Activated T-helper 2 cell treated with anti-CD3 and anti-CD28 coated beads, Interferon-gamma antibody, Interleukin-2, Interleukin-4, amounts not matched to agents 10 μg/mL and 5 μg/mL and 100 μg/mL, durations not matched to agents 14 hours and 24 hours and 36 hours (primary cell): ENCODE measurements at regions of chr6 and their contacts with region 1.

Region 1: GRCh38 chr6:95431637-95432228 is 145.6 kb upstream of the MANEA start:
- DNase-seq: no peak
- H3K4me3 Mint-ChIP-seq: no peak overlapping the region
- H3K27ac Mint-ChIP-seq: no peak overlapping the region
- H3K4me1 Mint-ChIP-seq: no peaks in the 10 kb centered on the region
- H3K27me3 Mint-ChIP-seq: no peaks in the 10 kb centered on the region

Region 2: GRCh38 chr6:95469511-95469910 is 37.8 kb after region 1 on chr6:
- intact Hi-C with region 1: no loop called
- DNase-seq: no peak
- H3K4me3 Mint-ChIP-seq: no peak overlapping the region
- H3K27ac Mint-ChIP-seq: no peak overlapping the region
- H3K4me1 Mint-ChIP-seq: no peaks in the 10 kb centered on the region
- H3K27me3 Mint-ChIP-seq: no peaks in the 10 kb centered on the region

Region 3: GRCh38 chr6:95648638-95649037 is 216.9 kb after region 1 on chr6:
- intact Hi-C with region 1: no loop called
- DNase-seq: no peak
- H3K4me3 Mint-ChIP-seq: no peak overlapping the region
- H3K27ac Mint-ChIP-seq: no peak overlapping the region
- H3K4me1 Mint-ChIP-seq: no peaks in the 10 kb centered on the region
- H3K27me3 Mint-ChIP-seq: no peaks in the 10 kb centered on the region

Region 4: DNA sequence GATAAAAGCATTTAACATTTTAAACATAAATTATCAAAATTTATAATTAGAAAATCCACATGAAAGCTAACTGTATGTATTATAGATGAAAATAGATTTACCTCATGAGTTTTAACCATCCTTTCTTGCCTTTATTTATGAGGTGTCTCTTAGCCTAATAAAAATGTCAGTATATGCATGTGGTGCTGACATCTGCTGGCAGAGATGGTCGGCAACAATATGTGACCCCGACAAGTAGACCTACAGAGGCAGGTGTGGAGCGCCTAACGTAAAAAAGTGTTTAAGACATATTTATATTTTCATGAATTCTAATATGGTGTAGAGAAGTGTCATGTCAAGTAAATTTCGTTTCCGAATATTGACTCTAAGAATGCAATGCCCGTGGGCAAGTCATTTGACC is 435.0 kb after region 1 on chr6:
- intact Hi-C with region 1: loop called (anchors 5 kb)
- DNase-seq: no peak
- H3K4me3 Mint-ChIP-seq: no peak overlapping the region
- H3K27ac Mint-ChIP-seq: no peak overlapping the region
- H3K4me1 Mint-ChIP-seq: no peaks in the 10 kb centered on the region
- H3K27me3 Mint-ChIP-seq: no peaks in the 10 kb centered on the region

Region 5: DNA sequence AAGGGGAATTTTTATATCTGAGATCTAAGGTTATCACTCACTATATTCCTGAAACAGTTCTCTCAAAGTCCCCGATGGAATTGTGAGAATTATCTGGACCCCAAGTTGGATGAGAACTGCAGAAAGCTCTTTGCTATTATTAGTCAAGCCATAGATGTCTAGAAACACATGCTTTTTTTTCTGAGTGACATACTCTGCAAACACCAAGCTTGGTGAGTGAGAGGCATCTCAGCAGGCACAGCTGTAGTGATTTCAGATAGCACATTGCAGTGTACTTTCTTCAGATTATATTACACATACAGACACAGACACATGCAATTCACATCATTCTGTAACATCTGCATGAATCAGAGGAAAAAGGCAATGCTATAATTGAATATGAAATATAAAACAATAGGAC is 978.7 kb after region 1 on chr6:
- intact Hi-C with region 1: no loop called
- DNase-seq: no peak
- H3K4me3 Mint-ChIP-seq: no peak overlapping the region
- H3K27ac Mint-ChIP-seq: no peak overlapping the region
- H3K4me1 Mint-ChIP-seq: no peaks in the 10 kb centered on the region
- H3K27me3 Mint-ChIP-seq: no peaks in the 10 kb centered on the region